Mammary epithelial cell (primary cell): ENCODE measurements at regions of chr1 and their contacts with region 1.

Region 1: DNA sequence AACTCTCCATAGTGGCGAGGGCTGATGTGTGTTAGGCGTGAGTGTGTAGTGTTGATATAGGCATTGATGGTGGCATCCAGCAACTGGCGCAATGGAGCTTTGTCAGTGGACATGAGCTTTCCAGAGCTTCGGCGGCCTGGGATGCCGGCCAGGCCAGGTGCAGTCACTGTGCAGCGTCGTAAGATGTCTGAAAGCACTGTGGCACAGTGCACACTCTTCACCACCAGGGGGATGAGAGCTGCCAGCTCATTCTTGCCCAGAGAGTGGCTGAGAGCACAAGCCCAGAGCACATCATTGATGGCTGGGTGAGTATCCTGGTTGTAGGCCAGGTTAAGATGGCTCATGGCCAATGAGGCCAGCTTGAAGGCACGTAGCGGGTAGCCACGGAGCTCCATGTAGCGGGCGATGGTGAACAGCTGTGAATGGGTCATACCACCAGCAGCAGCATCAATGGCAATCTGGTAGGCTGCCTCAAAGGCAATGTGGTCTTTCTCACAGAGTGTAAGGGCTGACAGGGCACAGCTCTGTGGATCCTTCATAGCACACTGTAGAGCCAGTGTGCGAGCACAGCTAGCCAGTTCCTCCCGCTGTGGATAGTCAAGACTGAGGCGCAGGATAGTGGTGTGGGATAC is 6.7 kb downstream of the UROD start:
- DNase-seq: peak; percentile 70
- H3K4me3 ChIP-seq: no peak overlapping the region
- H3K27ac ChIP-seq: no peak overlapping the region
- H3K4me1 ChIP-seq: peaks cover 3% of the 10 kb centered on the region
- H3K27me3 ChIP-seq: no peaks in the 10 kb centered on the region
- CTCF ChIP-seq: peak; percentile 90 to 94

Region 2: DNA sequence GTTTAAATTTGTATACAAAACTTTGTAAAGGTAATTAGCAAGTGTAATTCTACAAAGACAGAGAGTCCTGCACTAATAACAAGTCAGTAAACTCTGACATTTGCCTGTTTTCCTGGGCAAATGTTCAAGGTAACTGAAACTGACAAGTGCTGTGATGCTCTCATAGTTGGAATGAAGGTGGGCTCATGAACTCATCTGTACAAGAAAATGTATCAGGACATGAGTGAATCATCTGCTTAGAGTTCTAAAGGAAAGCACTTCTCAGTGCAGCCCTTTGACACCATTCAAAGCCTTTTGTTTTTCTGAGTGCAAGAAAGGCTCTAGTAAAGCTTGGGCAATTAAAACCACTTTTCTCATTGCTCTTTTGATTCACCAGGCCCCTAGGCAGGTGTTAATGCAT is 84.8 kb after region 1 on chr1:
- CTCF ChIA-PET with region 1: no interaction called
- dilution Hi-C with region 1: loop called (anchors 5 kb)
- in situ Hi-C with region 1: no loop called
- intact Hi-C with region 1: no loop called
- DNase-seq: no peak
- H3K4me3 ChIP-seq: no peak overlapping the region
- H3K27ac ChIP-seq: no peak overlapping the region
- H3K4me1 ChIP-seq: no peaks in the 10 kb centered on the region
- H3K27me3 ChIP-seq: no peaks in the 10 kb centered on the region
- CTCF ChIP-seq: no peak

Region 3: DNA sequence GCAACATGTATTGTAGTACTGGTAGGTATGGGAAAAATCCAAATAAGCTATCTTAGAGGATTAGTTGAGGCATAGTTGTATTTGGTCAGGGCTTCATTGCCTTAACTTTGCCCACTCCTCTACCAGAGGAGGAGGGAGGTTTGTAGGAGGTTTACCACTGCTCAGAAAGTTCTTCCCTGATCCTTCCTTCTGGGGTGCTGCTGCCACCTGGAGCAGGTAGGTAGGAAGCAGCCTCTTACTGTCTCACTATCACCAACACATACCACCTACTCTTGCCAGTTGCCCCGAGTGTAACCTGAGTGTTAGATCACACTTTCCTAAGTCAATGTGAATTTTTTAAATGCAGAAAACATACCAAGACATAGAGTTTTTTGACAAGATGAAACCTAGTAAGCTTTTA is 211.8 kb after region 1 on chr1:
- CTCF ChIA-PET with region 1: no interaction called
- dilution Hi-C with region 1: no loop called
- in situ Hi-C with region 1: no loop called
- intact Hi-C with region 1: loop called (anchors 1 kb)
- DNase-seq: no peak
- H3K4me3 ChIP-seq: no peak overlapping the region
- H3K27ac ChIP-seq: no peak overlapping the region
- H3K4me1 ChIP-seq: no peaks in the 10 kb centered on the region
- H3K27me3 ChIP-seq: no peaks in the 10 kb centered on the region
- CTCF ChIP-seq: peak in 1 of 2 donors; percentile 66

Region 4: DNA sequence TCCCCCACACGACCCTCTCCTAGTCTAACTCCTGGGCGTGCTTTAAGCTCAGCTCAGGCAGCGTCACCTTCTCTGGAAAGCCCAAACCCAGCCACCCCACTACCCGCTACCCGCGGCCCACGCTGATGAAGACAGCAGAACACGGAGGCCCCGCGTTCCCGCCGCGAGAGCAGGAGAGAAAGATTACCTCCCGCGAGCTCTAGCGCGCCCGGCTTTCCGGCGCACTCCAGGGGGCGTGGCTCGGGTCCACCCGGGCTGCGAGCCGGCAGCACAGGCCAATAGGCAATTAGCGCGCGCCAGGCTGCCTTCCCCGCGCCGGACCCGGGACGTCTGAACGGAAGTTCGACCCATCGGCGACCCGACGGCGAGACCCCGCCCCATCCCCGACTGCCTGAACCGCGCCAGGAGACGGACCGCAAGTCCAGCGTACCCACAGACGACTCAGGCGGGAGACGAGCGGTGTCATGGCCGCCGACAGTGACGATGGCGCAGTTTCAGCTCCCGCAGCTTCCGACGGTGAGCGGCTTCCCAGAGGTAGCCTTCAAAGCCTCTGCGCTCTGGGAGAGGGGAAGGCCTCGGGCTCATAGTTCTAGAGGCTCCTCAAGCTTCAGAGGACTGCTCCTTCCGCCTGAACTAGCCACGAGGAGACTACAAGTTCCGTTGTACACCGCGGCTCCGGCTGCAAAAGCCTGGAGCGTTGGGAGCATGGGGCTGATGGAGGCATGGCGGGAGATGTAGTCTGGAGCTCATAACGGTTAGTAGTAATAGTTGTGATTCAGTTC is 321.3 kb after region 1 on chr1 and contains the starts of genes MUTYH and TOE1:
- CTCF ChIA-PET with region 1: no interaction called
- dilution Hi-C with region 1: no loop called
- in situ Hi-C with region 1: no loop called
- intact Hi-C with region 1: loop called (anchors 1 kb)
- DNase-seq: peak; percentile 91
- H3K4me3 ChIP-seq: peak within 1 kb of the TSS; percentile 58 to 75 (median 68)
- H3K27ac ChIP-seq: peak within 1 kb of the TSS; percentile 84
- H3K4me1 ChIP-seq: peaks cover 12% of the 10 kb centered on the region
- H3K27me3 ChIP-seq: no peaks in the 10 kb centered on the region
- CTCF ChIP-seq: no peak
- total RNA-seq, gene MUTYH: 9.8 to 24.8 TPM
- total RNA-seq, gene TOE1: 9.0 to 12.8 TPM